ENCODE measurements at regions of chr3 and their contacts with region 1.

Region 1: DNA sequence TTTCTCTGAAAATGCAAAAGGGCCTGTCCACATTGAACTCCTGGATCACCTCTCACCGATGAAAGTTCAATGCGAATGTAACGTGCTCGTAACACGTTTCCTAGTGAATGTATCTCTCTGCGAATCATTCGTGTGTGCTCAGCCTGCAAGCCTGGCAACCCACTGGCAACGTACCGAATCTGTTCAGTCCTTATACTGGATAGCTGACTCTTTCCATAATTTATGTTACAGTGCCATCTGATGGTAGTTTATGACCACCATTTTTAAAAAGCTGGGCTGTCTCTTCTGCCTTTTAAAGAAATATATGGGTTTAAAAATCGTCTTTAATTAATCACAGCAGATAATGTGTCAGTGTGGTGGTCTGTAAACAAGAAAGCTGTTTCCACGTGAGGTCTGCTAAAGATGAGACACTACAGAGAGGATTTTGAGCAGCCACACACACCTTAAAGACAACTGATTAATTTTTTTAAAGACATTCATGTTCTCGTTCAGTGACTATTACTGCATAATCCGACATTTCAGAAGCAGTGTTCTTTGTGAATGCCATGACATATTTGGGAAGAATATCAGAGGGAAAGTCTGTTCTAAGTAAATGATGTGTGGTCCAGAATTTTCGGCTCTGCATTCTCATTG is 69.4 kb upstream of the FOXP1 start:
- DNase-seq: peak; percentile 16 to 61 (median 28)
- ATAC-seq: peak; percentile 81
- H3K4me3 ChIP-seq: no peak overlapping the region
- H3K27ac ChIP-seq: no peak overlapping the region
- H3K4me1 ChIP-seq: no peaks in the 10 kb centered on the region; a peak in 1 of 5 replicates
- H3K27me3 ChIP-seq: peaks cover under 1% of the 10 kb centered on the region in 2 experiments; a peak in 3 of 5 replicates
- CTCF ChIP-seq: peak in 2 of 3 experiments; percentile 53 to 72; a peak in 4 of 6 replicates
- EP300 ChIP-seq: no peak
- POLR2A ChIP-seq: no peak
- RAD21 ChIP-seq: peak; percentile 64 to 83

Region 2: DNA sequence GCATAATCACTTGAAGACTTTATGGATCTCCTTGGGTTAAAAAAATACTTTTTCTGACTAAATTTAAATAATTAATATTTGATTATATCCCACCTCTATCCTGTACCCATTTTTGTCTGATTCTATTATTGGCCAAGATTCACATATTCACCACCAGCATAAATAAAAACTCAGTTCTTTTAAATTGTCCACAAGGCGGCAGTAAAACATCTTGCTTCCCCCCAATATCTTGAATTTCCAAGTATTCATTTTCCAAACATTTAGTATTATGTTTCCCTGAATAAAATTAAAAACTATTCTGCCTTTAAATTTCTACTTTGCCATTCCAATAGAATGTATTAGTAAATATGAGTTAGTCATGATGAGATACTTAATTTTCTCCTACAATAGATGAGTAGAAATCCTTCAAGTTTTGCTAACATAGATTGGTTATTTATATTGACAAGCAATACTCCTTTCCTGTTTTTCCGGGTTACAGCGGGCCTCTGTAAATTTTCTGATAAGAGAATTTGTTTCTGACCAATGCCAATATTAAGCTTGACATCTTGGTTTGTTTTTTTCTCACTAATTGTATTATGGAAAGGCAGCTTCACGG is 1121.7 kb before region 1 on chr3:
- CTCF ChIA-PET with region 1: interaction called, 4 read pairs
- POLR2A ChIA-PET with region 1: no interaction called
- in situ Hi-C with region 1: no loop called
- intact Hi-C with region 1: loop called (anchors 5 kb)
- DNase-seq: peak; percentile 5 to 22 (median 12)
- ATAC-seq: no peak
- H3K4me3 ChIP-seq: no peak overlapping the region
- H3K27ac ChIP-seq: no peak overlapping the region
- H3K4me1 ChIP-seq: no peaks in the 10 kb centered on the region
- H3K27me3 ChIP-seq: peaks cover 0 to 5% of the 10 kb centered on the region in 2 experiments; a peak in 1 of 5 replicates
- CTCF ChIP-seq: peak in 2 of 3 experiments; percentile 36 to 60; a peak in 4 of 6 replicates
- EP300 ChIP-seq: no peak
- POLR2A ChIP-seq: no peak
- RAD21 ChIP-seq: peak; percentile 46 to 70

Region 3: GRCh38 chr3:70539908-70540307 is 1113.0 kb before region 1 on chr3:
- CTCF ChIA-PET with region 1: no interaction called
- POLR2A ChIA-PET with region 1: no interaction called
- in situ Hi-C with region 1: loop called (anchors 10 kb)
- intact Hi-C with region 1: no loop called
- DNase-seq: peak; percentile 6 to 40 (median 7)
- ATAC-seq: 0 out of 3 replicates have a peak, but pooled peaks have one; percentile 51
- H3K4me3 ChIP-seq: no peak overlapping the region
- H3K27ac ChIP-seq: no peak overlapping the region
- H3K4me1 ChIP-seq: no peaks in the 10 kb centered on the region
- H3K27me3 ChIP-seq: no peaks in the 10 kb centered on the region
- CTCF ChIP-seq: peak; percentile 41 to 52 (median 42)
- EP300 ChIP-seq: no peak
- POLR2A ChIP-seq: no peak
- RAD21 ChIP-seq: peak in 1 of 2 experiments; percentile 38; a peak in 1 of 4 replicates

Region 4: GRCh38 chr3:71641674-71642073 is 11.2 kb before region 1 on chr3:
- CTCF ChIA-PET with region 1: no interaction called
- POLR2A ChIA-PET with region 1: no interaction called
- in situ Hi-C with region 1: no loop called
- intact Hi-C with region 1: no loop called
- DNase-seq: peak; percentile 68 to 87 (median 82)
- ATAC-seq: peak; percentile 97
- H3K4me3 ChIP-seq: no peak overlapping the region
- H3K27ac ChIP-seq: no peak overlapping the region
- H3K4me1 ChIP-seq: no peaks in the 10 kb centered on the region
- H3K27me3 ChIP-seq: peaks cover 0 to 5% of the 10 kb centered on the region in 2 experiments; a peak in 2 of 5 replicates
- CTCF ChIP-seq: no peak
- EP300 ChIP-seq: no peak
- POLR2A ChIP-seq: no peak
- RAD21 ChIP-seq: no peak

Region 5: GRCh38 chr3:71671216-71671845 is 18.4 kb after region 1 on chr3:
- CTCF ChIA-PET with region 1: no interaction called
- POLR2A ChIA-PET with region 1: no interaction called
- in situ Hi-C with region 1: no loop called
- intact Hi-C with region 1: no loop called
- DNase-seq: no peak
- ATAC-seq: no peak
- H3K4me3 ChIP-seq: no peak overlapping the region
- H3K27ac ChIP-seq: no peak overlapping the region
- H3K4me1 ChIP-seq: no peaks in the 10 kb centered on the region; a peak in 1 of 5 replicates
- H3K27me3 ChIP-seq: peaks cover 15 to 28% of the 10 kb centered on the region in 2 experiments
- CTCF ChIP-seq: no peak
- EP300 ChIP-seq: no peak
- POLR2A ChIP-seq: no peak
- RAD21 ChIP-seq: no peak

Measured in K562 (cell line).